ENCODE measurements at regions of chr2 and their contacts with region 1.

Region 1: GRCh38 chr2:95053543-95053942 is 28.0 kb downstream of the MAL start:
- DNase-seq: no peak
- H3K4me3 ChIP-seq: no peak overlapping the region
- H3K27ac ChIP-seq: peak overlapping the region; percentile 92; the same call in 1 of the 2 replicates
- H3K4me1 ChIP-seq: peaks cover 98% of the 10 kb centered on the region
- H3K27me3 ChIP-seq: no peaks in the 10 kb centered on the region
- CTCF ChIP-seq: peak; percentile 40; the same call in 1 of the 2 replicates

Region 2: DNA sequence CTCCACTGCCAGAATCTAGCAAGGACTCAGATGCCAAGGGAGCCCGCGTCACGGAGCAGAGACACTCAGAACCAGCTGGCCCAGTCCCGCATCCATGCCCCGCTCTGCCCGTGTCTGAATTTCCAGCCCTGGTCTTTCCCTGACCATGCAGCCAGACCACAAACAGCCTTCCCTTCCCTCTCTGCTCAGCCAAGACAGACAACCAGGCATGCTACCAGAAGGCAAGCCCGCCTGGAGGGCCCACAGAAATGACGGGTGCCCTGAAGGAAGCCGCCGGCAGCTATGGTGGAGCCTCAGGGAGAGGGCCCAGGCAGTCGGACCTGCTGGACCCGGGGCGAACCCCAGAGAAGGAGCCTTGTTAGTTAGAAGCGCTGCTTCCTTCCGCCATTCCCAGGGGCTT is 73.1 kb before region 1 on chr2:
- CTCF ChIA-PET with region 1: no interaction called
- POLR2A ChIA-PET with region 1: no interaction called
- intact Hi-C with region 1: no loop called
- DNase-seq: no peak
- H3K4me3 ChIP-seq: no peak overlapping the region
- H3K27ac ChIP-seq: no peak overlapping the region
- H3K4me1 ChIP-seq: peaks cover 14% of the 10 kb centered on the region
- H3K27me3 ChIP-seq: 0 out of 2 replicates have a peak, but pooled peaks cover under 1% of the 10 kb centered on the region
- CTCF ChIP-seq: no peak

Region 3: DNA sequence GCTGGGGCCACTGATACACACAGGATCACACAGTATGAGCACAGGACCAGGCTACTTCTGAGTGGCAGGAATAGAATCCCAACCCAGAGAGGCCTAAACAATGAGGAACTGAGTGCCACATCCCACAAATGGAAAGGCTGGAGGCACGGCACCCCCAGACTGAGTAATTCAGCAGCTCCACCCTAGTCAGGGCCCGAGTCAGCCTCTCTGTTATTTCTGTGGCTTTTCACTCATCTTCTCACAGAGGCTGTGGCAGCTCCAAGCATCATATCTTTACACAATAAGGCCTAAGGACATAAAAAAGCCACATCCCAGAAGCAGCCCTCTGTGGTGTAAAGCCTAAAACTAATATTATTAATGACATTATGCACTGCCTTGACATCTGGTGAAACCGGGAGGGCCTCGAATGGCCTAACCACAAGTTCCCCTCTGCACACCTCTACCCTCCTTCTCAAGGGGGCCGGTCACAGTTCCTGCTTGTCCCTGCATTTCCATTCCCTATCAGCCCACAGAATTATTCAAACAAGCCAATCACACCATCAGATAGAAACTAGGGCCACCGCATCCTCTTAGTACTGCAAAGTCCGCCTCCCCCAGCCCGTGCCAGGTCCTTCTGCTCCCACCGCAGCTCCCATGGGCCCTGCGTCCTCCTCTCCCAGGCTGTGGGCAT is 40.5 kb before region 1 on chr2:
- CTCF ChIA-PET with region 1: no interaction called
- POLR2A ChIA-PET with region 1: no interaction called
- intact Hi-C with region 1: no loop called
- DNase-seq: peak in 1 of 2 experiments; percentile 73
- H3K4me3 ChIP-seq: no peak overlapping the region
- H3K27ac ChIP-seq: no peak overlapping the region
- H3K4me1 ChIP-seq: peaks cover 17% of the 10 kb centered on the region
- H3K27me3 ChIP-seq: no peaks in the 10 kb centered on the region
- CTCF ChIP-seq: no peak

Region 4: GRCh38 chr2:95034221-95034620 is 19.3 kb before region 1 on chr2:
- CTCF ChIA-PET with region 1: interaction called, 7 read pairs
- POLR2A ChIA-PET with region 1: interaction called, 10 read pairs
- intact Hi-C with region 1: loop called (anchors 1 kb)
- DNase-seq: peak; percentile 75 to 94
- H3K4me3 ChIP-seq: no peak overlapping the region
- H3K27ac ChIP-seq: peak overlapping the region; percentile 99
- H3K4me1 ChIP-seq: peaks cover 84% of the 10 kb centered on the region
- H3K27me3 ChIP-seq: no peaks in the 10 kb centered on the region
- CTCF ChIP-seq: no peak

Region 5: DNA sequence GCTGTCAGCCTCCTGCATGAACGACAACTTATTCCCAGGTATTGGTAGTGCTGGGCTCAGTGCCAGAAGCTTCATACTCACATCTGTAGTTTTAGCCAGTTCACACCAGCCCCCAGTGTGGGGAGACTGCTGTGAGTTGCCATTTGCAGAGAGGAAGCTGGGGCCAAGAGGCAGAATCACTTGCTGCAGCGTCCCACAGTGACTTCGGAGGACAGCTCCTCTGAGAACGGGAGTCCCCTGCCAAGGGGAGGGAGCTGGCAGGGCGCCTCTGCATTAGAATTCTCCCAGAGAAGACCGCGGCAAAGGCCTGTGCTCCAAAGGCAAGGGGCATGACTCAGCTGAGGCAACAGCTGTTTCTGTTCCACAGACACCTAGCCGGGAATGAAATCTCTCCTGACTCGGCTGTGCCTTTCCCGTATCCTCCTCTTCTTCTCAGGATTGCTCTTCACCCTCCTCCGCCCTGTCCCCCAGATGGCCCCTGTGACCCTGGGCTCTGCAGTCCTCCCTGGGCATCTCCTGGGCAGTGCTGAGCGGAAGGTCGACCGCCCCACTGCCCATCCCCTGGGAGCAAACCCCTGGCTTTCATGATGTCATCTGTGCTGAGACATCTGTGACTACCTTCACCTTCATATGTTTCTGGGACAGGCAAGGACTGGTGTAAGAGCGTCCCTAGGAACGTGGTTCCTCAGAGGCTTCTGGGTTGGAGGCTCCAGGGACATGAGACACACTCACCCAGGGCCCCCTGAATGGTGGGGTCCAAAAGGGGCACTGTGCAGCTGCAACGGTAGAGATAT is 10.0 kb before region 1 on chr2:
- CTCF ChIA-PET with region 1: interaction called, 3 read pairs
- POLR2A ChIA-PET with region 1: interaction called, 6 read pairs
- intact Hi-C with region 1: loop called (anchors 1 kb)
- DNase-seq: peak in 1 of 2 experiments; percentile 83
- H3K4me3 ChIP-seq: no peak overlapping the region
- H3K27ac ChIP-seq: peak overlapping the region; percentile 48
- H3K4me1 ChIP-seq: peaks cover 65% of the 10 kb centered on the region
- H3K27me3 ChIP-seq: no peaks in the 10 kb centered on the region
- CTCF ChIP-seq: no peak

Measured in PC-9 (cell line).